ENCODE measurements at regions of chr10 and their contacts with region 1.

Region 1: DNA sequence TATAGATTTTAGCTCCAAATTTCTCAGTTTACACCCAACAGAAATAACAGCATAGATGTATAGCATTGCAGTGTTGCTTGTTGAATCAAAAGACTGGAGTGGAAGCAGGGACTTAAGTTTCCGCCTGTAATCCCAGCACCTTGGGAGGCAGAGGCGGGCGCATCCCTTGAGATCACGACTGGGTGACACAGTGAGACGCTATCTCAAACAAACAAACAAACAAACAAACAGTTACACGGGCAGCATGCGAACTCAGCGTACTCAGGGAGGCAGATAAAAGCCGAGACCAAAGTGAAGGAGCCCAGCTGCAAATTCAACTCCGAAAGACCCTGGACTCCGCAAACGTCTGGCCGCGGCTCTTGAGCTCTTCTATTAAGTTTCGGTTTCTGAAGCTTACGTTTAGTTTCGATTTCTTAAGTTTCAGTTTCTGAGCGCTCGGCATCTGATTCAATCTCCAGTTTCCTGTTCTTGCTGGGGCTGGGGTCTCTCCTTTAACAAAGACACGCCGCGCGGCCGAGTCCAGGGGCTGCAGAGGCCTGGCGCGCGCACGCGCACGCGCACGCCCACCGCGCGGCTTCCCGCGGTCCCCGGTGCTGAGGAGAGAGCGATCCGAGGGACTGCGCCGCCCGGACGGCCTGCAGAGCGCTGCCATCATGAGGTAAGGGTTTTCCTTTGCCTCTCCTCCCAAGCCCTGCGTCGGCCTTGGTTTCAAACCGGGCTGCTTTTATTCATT is at the start of gene IFIT5:
- DNase-seq: peak; percentile 66 to 82
- ATAC-seq: peak; percentile 76 to 87 (median 82)
- H3K4me3 ChIP-seq: peak within 1 kb of the TSS; percentile 51
- H3K4me3 Mint-ChIP-seq: peak within 1 kb of the TSS; percentile 92
- H3K27ac ChIP-seq: peak within 1 kb of the TSS; percentile 79
- H3K27ac Mint-ChIP-seq: peak within 1 kb of the TSS; percentile 90 to 95
- H3K4me1 ChIP-seq: peaks cover 22% of the 10 kb centered on the region
- H3K4me1 Mint-ChIP-seq: peaks cover 38 to 44% of the 10 kb centered on the region in 2 donors
- H3K27me3 ChIP-seq: no peaks in the 10 kb centered on the region
- H3K27me3 Mint-ChIP-seq: no peaks in the 10 kb centered on the region
- CTCF ChIP-seq: no peak
- total RNA-seq, gene IFIT5: 17.7 to 23.6 (median 20.4) TPM

Region 2: DNA sequence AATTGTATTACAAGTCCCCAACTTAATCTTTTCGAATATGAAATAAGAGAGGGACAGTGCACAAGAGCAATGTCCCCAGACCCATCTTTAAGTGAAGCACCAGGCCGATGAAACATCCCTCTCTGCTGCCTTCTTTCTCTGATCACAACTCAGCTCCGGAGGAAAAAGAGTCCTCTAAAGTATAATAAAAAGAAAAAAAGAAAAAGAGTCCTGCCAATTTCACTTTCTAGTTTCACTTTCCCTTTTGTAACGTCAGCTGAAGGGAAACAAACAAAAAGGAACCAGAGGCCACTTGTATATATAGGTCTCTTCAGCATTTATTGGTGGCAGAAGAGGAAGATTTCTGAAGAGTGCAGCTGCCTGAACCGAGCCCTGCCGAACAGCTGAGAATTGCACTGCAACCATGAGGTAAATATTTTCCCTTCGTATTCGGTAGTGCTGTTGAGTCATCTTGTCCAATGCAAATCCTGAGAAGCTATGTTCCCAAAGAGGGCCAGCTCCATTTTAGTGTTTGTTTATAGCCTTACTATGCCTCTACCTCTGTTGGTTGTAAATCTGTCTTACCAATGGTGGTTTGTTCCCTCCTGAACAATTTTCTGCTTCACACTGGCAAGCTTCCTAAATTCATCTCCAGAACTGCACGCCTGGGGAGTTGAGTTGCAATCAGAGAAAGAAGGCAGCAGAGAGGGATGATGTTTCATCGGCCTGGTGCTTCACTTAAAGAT is 112.4 kb before region 1 on chr10 and contains the start of gene IFIT2:
- intact Hi-C with region 1: loop called (anchors 2 kb)
- DNase-seq: peak in 1 of 2 donors; percentile 79
- ATAC-seq: peak; percentile 70 to 75 (median 75)
- H3K4me3 ChIP-seq: peak within 1 kb of the TSS; percentile 75
- H3K4me3 Mint-ChIP-seq: peak within 1 kb of the TSS; percentile 95
- H3K27ac ChIP-seq: peak within 1 kb of the TSS; percentile 89
- H3K27ac Mint-ChIP-seq: peak within 1 kb of the TSS; percentile 95 to 98
- H3K4me1 ChIP-seq: peaks cover 34% of the 10 kb centered on the region
- H3K4me1 Mint-ChIP-seq: peaks cover 51 to 59% of the 10 kb centered on the region in 2 donors
- H3K27me3 ChIP-seq: no peaks in the 10 kb centered on the region
- H3K27me3 Mint-ChIP-seq: no peaks in the 10 kb centered on the region
- CTCF ChIP-seq: no peak
- total RNA-seq, gene IFIT2: 21.8 to 103 (median 34.9) TPM

Region 3: GRCh38 chr10:89327784-89328441 is 86.4 kb before region 1 on chr10 and contains the start of gene IFIT3:
- intact Hi-C with region 1: loop called (anchors 1 kb)
- DNase-seq: peak in 1 of 2 donors; percentile 62
- ATAC-seq: peak; percentile 30 to 51 (median 36)
- H3K4me3 ChIP-seq: peak within 1 kb of the TSS; percentile 63
- H3K4me3 Mint-ChIP-seq: peak within 1 kb of the TSS; percentile 95
- H3K27ac ChIP-seq: peak within 1 kb of the TSS; percentile 74
- H3K27ac Mint-ChIP-seq: peak within 1 kb of the TSS; percentile 92 to 96
- H3K4me1 ChIP-seq: peaks cover 33% of the 10 kb centered on the region
- H3K4me1 Mint-ChIP-seq: peaks cover 43 to 46% of the 10 kb centered on the region in 2 donors
- H3K27me3 ChIP-seq: peaks cover 4% of the 10 kb centered on the region
- H3K27me3 Mint-ChIP-seq: peaks cover 11 to 17% of the 10 kb centered on the region in 2 donors
- CTCF ChIP-seq: no peak
- total RNA-seq, gene IFIT3: 12.0 to 31.7 (median 12.2) TPM

Region 4: GRCh38 chr10:89391917-89392756 is 22.2 kb before region 1 on chr10 and contains the start of gene IFIT1:
- intact Hi-C with region 1: loop called (anchors 1 kb)
- DNase-seq: peak in 1 of 2 donors; percentile 89
- ATAC-seq: peak; percentile 92 to 94 (median 94)
- H3K4me3 ChIP-seq: peak within 1 kb of the TSS; percentile 56
- H3K4me3 Mint-ChIP-seq: peak within 1 kb of the TSS; percentile 96
- H3K27ac ChIP-seq: peak within 1 kb of the TSS; percentile 73
- H3K27ac Mint-ChIP-seq: peak within 1 kb of the TSS; percentile 89 to 93
- H3K4me1 ChIP-seq: peaks cover 8% of the 10 kb centered on the region
- H3K4me1 Mint-ChIP-seq: peaks cover 21 to 22% of the 10 kb centered on the region in 2 donors
- H3K27me3 ChIP-seq: no peaks in the 10 kb centered on the region
- H3K27me3 Mint-ChIP-seq: no peaks in the 10 kb centered on the region
- CTCF ChIP-seq: no peak
- total RNA-seq, gene IFIT1: 1.0 to 4.9 (median 2.7) TPM

Region 5: DNA sequence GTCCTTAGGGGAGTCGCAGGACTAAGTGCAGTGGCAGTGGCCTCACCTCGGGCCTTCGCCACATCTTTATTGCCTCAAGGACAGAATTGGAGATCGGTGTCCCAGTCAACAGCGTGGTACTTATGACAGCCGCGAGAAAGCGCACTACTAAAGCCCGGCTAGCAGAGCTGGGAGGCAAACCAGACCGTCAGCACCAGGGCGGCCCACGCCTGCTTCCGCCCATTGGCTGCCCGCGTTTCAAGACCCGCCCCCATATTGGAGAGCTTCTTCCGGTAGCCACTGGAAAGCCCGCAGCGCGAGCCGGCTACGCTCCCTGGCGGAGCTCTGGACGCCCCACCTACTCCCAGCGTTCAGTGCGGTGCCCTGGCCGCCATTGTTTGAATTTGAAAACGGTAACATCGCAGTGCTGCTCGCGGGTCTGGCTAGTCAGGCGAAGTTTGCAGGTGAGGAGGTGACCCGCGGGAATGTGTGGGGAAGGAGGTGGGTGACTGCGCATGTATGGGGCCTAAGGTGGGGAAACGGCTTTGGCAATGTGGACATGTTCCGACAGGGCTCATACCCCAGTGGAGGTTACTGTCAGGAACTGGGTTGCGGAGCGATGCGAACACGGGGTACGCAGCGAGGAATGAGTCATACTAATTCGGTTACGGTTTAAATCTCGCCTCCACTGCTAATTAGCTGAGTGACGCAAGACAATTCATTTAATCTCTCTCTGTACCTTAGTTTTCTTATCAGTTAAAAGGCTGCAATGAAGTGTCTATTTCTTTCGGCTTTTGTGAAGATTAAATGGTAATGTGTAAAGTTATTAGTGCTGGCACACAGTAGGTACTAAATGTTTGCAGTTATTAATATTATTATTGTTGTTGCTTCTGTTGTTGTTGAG is 287.2 kb after region 1 on chr10 and contains the start of gene KIF20B:
- intact Hi-C with region 1: loop called (anchors 10 kb)
- DNase-seq: peak; percentile 93 to 96
- ATAC-seq: peak; percentile 95 to 99 (median 97)
- H3K4me3 ChIP-seq: peak within 1 kb of the TSS; percentile 66
- H3K4me3 Mint-ChIP-seq: peak within 1 kb of the TSS; percentile 99
- H3K27ac ChIP-seq: peak within 1 kb of the TSS; percentile 78
- H3K27ac Mint-ChIP-seq: peak within 1 kb of the TSS; percentile 95 to 100
- H3K4me1 ChIP-seq: peaks cover 5% of the 10 kb centered on the region
- H3K4me1 Mint-ChIP-seq: peaks cover 18 to 22% of the 10 kb centered on the region in 2 donors
- H3K27me3 ChIP-seq: no peaks in the 10 kb centered on the region
- H3K27me3 Mint-ChIP-seq: no peaks in the 10 kb centered on the region
- CTCF ChIP-seq: no peak
- total RNA-seq, gene KIF20B: 17.2 to 20.2 (median 17.3) TPM